ENCODE measurements at regions of chr1 and their contacts with region 1.

Region 1: GRCh38 chr1:204363335-204364124 is 3.8 kb upstream of the PLEKHA6 start:
- DNase-seq: peak; percentile 77
- ATAC-seq: peak; percentile 76

Region 2: DNA sequence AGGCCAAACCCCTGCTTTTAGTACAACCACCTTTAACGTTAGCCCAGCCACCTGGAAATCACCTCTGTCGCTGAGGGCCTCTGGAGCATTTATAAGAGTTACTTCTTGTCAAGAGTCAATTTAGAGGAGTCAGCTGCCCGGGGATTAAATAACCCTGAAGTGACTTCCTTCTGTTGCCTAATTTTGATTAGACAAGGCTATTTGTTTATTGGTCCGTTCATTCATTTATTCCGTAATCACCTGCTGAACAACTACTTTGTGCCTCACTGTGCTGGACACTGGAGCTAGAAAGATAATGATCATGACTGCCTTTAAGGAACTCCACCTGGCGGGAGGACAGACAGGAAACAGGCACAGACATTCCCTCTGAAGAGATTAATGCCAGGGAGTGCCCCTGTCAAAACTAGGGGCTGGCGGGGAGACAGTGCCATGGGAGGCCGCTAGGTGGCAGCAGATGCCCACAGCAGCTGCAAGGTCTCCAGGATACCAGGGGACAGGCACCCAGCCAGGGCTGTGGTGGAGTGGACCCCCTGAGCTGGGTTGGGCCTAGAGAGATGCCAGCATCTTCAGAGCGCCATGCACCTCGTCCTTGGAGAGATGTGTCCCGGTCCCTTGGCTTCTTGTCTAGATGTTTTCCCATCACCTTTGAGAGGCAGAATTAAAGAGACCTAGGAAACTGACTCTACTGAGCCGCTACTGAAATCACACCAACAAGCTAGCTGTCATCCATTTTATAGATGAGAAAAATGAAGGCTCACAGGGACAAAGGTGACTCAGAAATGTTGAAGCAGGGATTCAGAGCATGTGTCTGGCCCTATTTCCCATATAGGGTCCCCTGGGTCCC is 201.1 kb before region 1 on chr1:
- intact Hi-C with region 1: loop called (anchors 2 kb)
- DNase-seq: peak; percentile 88
- ATAC-seq: peak; percentile 92

Region 3: GRCh38 chr1:204213668-204214662 is 149.6 kb before region 1 on chr1 and contains the start of gene GOLT1A:
- intact Hi-C with region 1: loop called (anchors 5 kb)
- DNase-seq: peak; percentile 71
- ATAC-seq: peak; percentile 86
- total RNA-seq, gene GOLT1A: not detected